CD4-positive, alpha-beta memory T cell (primary cell): ENCODE measurements at regions of chr2 and their contacts with region 1.

Region 1: GRCh38 chr2:190648289-190649034 is 421 bp upstream of the NAB1 start:
- DNase-seq: peak; percentile 91 to 94 (median 92)
- H3K4me3 ChIP-seq: peak overlapping the region; percentile 31 to 57
- H3K4me3 Mint-ChIP-seq: peak overlapping the region; percentile 78 to 91 (median 85)
- H3K27ac ChIP-seq: peak overlapping the region; percentile 72
- H3K27ac Mint-ChIP-seq: peak overlapping the region; percentile 90 to 96 (median 93)
- H3K4me1 ChIP-seq: peaks cover 38% of the 10 kb centered on the region
- H3K4me1 Mint-ChIP-seq: peaks cover 19 to 49% (median 29%) of the 10 kb centered on the region in 4 donors
- H3K27me3 ChIP-seq: no peaks in the 10 kb centered on the region
- H3K27me3 Mint-ChIP-seq: no peaks in the 10 kb centered on the region

Region 2: GRCh38 chr2:189674374-189675112 is 973.9 kb before region 1 on chr2 and contains the start of gene ANKAR:
- CTCF ChIA-PET with region 1: no interaction called
- POLR2A ChIA-PET with region 1: no interaction called
- intact Hi-C with region 1: loop called (anchors 10 kb)
- DNase-seq: peak; percentile 80 to 86 (median 83)
- H3K4me3 ChIP-seq: peak within 1 kb of the TSS; percentile 42 to 77
- H3K4me3 Mint-ChIP-seq: peak within 1 kb of the TSS; percentile 95 to 98 (median 96)
- H3K27ac ChIP-seq: peak within 1 kb of the TSS; percentile 90
- H3K27ac Mint-ChIP-seq: peak within 1 kb of the TSS; percentile 96 to 99 (median 99)
- H3K4me1 ChIP-seq: peaks cover 21% of the 10 kb centered on the region
- H3K4me1 Mint-ChIP-seq: peaks cover 27 to 49% (median 40%) of the 10 kb centered on the region in 4 donors
- H3K27me3 ChIP-seq: no peaks in the 10 kb centered on the region
- H3K27me3 Mint-ChIP-seq: no peaks in the 10 kb centered on the region
- total RNA-seq, gene ANKAR: 18.4 to 20.2 TPM

Region 3: DNA sequence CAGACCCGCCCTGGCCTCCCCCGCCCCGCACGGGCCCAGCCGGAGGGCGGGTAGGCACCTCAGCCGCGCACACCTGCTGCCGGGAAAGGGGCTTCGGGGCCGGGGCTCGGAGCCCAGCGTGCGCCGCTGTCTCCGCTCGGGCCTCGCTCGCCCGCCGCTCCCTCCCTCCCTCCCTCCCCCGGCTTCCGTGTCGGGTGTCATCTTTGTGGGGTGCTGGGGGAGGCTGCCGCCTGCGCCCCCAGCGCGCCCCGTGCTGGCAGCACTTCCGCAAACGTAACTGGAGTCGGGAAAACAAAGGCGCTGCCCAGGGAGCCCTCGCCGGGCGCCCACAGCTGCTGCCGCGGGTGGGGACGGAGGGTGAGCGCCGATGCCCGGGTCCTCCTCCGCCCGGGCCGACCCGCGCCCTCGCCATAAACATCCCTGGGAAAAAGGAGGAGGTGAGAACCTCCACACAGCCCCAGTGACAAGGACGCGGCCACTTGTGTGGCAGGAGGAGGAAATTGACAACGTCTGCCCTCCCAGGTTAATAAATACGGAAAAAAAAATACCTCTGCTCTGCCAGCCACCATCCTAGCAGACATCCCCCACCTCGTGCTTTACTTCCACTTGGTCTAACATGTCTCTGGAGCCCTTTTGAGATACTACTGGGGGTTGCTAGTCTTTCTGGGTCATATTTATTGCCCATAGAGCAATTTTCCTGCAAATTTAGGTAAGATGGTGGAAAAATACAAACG is 239.8 kb before region 1 on chr2:
- CTCF ChIA-PET with region 1: interaction called, 4 read pairs
- POLR2A ChIA-PET with region 1: interaction called, 10 read pairs
- intact Hi-C with region 1: loop called (anchors 1 kb)
- DNase-seq: peak; percentile 78 to 86 (median 84)
- H3K4me3 ChIP-seq: peak overlapping the region; percentile 67 to 78
- H3K4me3 Mint-ChIP-seq: peak overlapping the region; percentile 89 to 95 (median 92)
- H3K27ac ChIP-seq: peak overlapping the region; percentile 96
- H3K27ac Mint-ChIP-seq: peak overlapping the region; percentile 96 to 99 (median 98)
- H3K4me1 ChIP-seq: peaks cover 54% of the 10 kb centered on the region
- H3K4me1 Mint-ChIP-seq: peaks cover 37 to 52% (median 41%) of the 10 kb centered on the region in 4 donors
- H3K27me3 ChIP-seq: no peaks in the 10 kb centered on the region
- H3K27me3 Mint-ChIP-seq: no peaks in the 10 kb centered on the region

Region 4: DNA sequence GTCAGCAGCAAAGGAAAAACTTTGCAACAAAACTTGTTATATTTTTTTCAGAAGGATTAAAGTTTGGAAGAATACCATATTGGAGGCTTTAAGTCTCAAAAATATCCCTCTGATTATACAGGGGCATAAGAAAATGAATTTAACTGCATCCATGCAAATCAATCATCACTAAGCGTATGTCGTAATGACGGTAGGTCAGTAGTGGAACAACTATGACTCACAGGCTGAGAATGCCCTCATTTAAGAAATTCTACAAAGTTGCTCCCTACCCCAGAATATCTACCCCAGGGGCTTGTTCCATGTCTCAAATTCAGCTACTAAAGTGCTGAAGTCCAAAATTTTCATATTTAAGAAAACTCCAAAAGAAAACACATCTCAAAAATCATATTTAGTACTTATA is 12.1 kb before region 1 on chr2:
- CTCF ChIA-PET with region 1: interaction called, 5 read pairs
- POLR2A ChIA-PET with region 1: interaction called, 3 read pairs
- intact Hi-C with region 1: loop called (anchors 2 kb)
- DNase-seq: no peak
- H3K4me3 ChIP-seq: no peak overlapping the region
- H3K4me3 Mint-ChIP-seq: no peak overlapping the region
- H3K27ac ChIP-seq: no peak overlapping the region
- H3K27ac Mint-ChIP-seq: peak overlapping the region in 1 of 7 donors; percentile 12
- H3K4me1 ChIP-seq: no peaks in the 10 kb centered on the region
- H3K4me1 Mint-ChIP-seq: peaks cover 0 to 6% (median under 1%) of the 10 kb centered on the region in 4 donors
- H3K27me3 ChIP-seq: no peaks in the 10 kb centered on the region
- H3K27me3 Mint-ChIP-seq: no peaks in the 10 kb centered on the region

Region 5: DNA sequence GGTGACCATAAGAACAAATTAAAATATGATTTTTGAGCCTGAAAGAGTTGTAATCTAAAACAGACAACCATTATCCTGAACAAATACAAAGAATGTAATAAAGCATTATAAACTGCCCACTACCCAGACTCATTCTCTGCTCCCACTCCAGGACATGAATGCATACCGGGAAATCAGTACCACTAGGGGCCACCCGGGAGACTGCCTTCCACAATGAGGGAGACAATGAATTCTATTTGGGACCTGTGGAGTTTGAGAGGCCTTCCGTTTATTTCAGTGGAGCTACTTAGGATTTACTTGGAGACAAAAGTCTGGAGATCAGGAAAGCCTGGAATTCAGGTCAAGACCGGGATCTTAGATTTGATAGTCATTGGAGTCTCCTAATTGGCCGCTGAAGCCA is 50.4 kb after region 1 on chr2:
- CTCF ChIA-PET with region 1: no interaction called
- POLR2A ChIA-PET with region 1: no interaction called
- intact Hi-C with region 1: no loop called
- DNase-seq: no peak
- H3K4me3 ChIP-seq: no peak overlapping the region
- H3K4me3 Mint-ChIP-seq: no peak overlapping the region
- H3K27ac ChIP-seq: no peak overlapping the region
- H3K27ac Mint-ChIP-seq: no peak overlapping the region
- H3K4me1 ChIP-seq: no peaks in the 10 kb centered on the region
- H3K4me1 Mint-ChIP-seq: peaks cover 0 to 8% (median under 1%) of the 10 kb centered on the region in 4 donors
- H3K27me3 ChIP-seq: no peaks in the 10 kb centered on the region
- H3K27me3 Mint-ChIP-seq: no peaks in the 10 kb centered on the region

Region 6: DNA sequence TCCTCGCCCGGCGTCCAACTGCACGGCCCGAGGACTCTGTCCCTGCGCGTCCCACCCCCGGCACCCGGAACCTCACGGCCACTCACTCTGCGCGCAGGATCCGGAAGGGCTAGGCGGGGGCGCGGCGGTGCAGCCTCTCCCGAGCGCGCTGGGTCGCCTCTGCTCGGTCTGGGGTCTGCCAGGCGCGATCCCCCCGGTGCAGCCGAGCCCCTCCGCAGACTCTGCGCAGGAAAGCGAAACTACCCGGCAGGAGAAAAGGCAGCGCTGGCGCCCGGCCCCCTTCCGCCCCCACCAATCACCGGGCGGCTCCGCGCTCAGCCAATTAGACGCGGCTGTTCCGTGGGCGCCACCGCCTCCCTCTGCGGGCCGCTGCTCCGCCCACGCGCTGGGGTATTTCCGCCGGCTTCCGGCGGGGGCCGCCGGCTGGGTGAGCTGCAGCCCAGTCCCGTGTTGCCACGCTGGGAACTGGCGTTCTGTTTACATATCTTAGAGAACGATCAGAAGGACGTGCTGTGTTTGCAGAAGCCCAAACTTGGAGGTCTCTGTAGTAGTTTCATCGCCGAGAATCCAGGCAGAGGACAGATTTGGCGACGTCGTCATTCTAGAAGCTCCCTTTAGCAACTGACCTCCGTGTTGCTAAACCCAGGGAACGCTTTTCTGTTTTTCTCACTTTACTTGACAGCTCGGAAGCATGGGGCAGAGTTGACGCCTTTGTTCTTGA is 365.6 kb after region 1 on chr2 and contains the start of gene STAT1:
- CTCF ChIA-PET with region 1: no interaction called
- POLR2A ChIA-PET with region 1: no interaction called
- intact Hi-C with region 1: loop called (anchors 10 kb)
- DNase-seq: peak; percentile 94 to 98 (median 96)
- H3K4me3 ChIP-seq: peak within 1 kb of the TSS; percentile 92 to 95
- H3K4me3 Mint-ChIP-seq: no peak within 1 kb of the TSS
- H3K27ac ChIP-seq: peak within 1 kb of the TSS; percentile 89
- H3K27ac Mint-ChIP-seq: no peak within 1 kb of the TSS
- H3K4me1 ChIP-seq: peaks cover 71% of the 10 kb centered on the region
- H3K4me1 Mint-ChIP-seq: peaks cover 29 to 48% (median 33%) of the 10 kb centered on the region in 4 donors
- H3K27me3 ChIP-seq: no peaks in the 10 kb centered on the region
- H3K27me3 Mint-ChIP-seq: no peaks in the 10 kb centered on the region
- total RNA-seq, gene STAT1: 130 TPM